ENCODE measurements at regions of chr17 and their contacts with region 1.

Region 1: DNA sequence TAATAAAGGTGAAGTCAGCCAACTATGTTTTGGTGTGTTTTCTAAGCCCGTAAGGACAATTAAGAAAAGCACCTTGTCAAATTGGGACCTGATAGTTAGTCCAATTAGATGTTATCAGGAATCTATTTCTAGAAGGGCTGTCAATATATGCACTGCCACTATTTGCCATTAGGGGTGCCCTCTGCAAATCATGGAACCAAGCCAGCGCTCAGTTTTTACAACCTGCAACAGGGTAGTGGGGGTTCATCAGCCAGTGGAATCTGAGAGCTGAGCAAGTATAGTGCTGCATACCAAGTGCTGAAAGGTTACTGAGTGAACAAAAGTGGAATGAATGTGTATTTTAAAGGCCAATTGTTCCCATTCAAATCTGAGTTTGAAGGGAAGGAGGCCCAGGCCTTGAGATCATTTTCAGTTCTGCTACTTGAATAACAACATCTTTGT is 10.4 kb downstream of the PRR11 start:
- DNase-seq: peak; percentile 76
- H3K4me3 ChIP-seq: no peak overlapping the region
- H3K27ac ChIP-seq: peak overlapping the region; percentile 14 to 34; a peak in 3 of 4 replicates
- H3K4me1 ChIP-seq: peaks cover 0 to 10% of the 10 kb centered on the region in 2 experiments; a peak in 2 of 4 replicates
- H3K27me3 ChIP-seq: no peaks in the 10 kb centered on the region
- CTCF ChIP-seq: peak; percentile 84
- EP300 ChIP-seq: no peak
- RAD21 ChIP-seq: peak; percentile 60

Region 2: DNA sequence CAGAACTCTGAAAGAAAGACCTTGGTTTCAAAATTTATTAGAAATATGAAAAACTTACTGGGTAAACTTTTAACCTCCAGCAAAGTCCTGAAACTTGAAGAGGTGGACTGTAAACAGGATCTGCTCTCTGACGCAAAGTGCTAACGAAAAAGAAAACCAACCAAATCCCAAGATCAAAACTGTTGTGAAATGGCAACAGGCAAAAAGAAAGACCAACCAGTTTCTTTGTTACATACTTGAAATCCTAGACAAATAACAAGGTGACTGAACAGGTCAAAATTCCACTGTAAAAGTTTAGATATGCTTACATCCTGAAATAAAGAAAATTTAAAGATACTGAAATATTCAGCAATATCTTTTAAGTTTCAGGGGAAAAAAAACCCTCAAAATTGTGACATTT is 103.4 kb before region 1 on chr17:
- CTCF ChIA-PET with region 1: no interaction called
- POLR2A ChIA-PET with region 1: no interaction called
- DNase-seq: no peak
- H3K4me3 ChIP-seq: no peak overlapping the region
- H3K27ac ChIP-seq: no peak overlapping the region
- H3K4me1 ChIP-seq: no peaks in the 10 kb centered on the region
- H3K27me3 ChIP-seq: no peaks in the 10 kb centered on the region
- CTCF ChIP-seq: no peak
- EP300 ChIP-seq: no peak
- RAD21 ChIP-seq: no peak

Region 3: DNA sequence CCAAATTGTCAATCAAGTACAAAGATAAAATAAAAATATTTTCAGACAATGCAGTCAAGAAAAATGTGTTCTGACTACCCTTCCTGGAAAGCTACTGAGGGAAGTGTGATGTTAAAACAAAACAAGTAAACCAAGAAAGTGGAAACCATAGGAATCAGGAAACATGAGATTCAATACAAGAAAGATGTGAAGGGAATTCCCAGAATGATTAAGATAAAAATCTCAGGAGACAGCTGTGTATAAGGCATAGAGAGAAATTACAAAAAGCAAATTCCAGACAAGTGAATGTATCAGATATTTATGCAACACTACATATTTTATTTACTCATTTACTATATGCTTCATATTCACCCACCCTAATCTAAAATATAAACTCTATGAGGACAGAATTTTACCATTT is 91.4 kb before region 1 on chr17:
- CTCF ChIA-PET with region 1: no interaction called
- POLR2A ChIA-PET with region 1: no interaction called
- DNase-seq: no peak
- H3K4me3 ChIP-seq: no peak overlapping the region
- H3K27ac ChIP-seq: peak overlapping the region in 1 of 2 experiments; percentile 35; a peak in 3 of 4 replicates
- H3K4me1 ChIP-seq: peaks cover 0 to 3% of the 10 kb centered on the region in 2 experiments; a peak in 1 of 4 replicates
- H3K27me3 ChIP-seq: no peaks in the 10 kb centered on the region
- CTCF ChIP-seq: no peak
- EP300 ChIP-seq: peak in 1 of 2 experiments; percentile 41; a peak in 1 of 4 replicates
- RAD21 ChIP-seq: no peak

Region 4: DNA sequence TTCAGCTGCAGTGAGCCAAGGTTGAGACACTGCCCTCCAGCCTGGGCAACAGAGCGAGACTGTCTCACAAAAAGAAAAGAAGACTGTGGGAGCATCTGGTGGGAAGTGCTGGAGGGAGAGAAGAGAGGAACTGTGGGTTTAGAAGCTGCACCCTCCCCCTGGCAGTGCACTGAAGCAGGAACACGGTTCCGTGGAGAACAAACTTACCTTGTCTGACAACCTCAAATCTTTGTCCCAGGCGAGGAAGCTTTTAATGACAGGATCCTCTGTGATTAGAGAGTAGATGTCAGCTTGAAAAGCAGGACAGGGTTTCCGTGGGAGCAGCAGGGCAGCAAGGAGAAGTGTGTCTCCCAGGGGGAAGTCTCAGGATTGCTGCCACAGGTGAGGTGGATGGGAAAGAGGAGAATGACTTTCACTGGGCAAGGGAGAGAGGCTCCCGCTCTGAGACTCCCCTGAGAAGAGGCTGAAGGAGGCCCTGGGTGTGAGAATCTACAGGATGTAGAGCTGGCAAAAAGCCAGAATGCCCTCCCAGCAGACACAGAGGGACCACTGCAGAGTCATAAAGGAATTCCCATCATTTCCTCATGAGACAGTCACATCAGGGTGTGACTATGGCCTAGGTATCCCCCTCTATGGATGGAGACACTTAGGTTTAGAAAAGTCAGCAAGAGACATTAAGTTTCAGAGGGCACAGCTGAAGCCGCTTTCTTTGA is 12.5 kb after region 1 on chr17:
- CTCF ChIA-PET with region 1: interaction called, 10 read pairs
- POLR2A ChIA-PET with region 1: no interaction called
- DNase-seq: no peak
- H3K4me3 ChIP-seq: no peak overlapping the region
- H3K27ac ChIP-seq: no peak overlapping the region
- H3K4me1 ChIP-seq: no peaks in the 10 kb centered on the region
- H3K27me3 ChIP-seq: no peaks in the 10 kb centered on the region
- CTCF ChIP-seq: no peak
- EP300 ChIP-seq: no peak
- RAD21 ChIP-seq: no peak